Mucosa of descending colon (tissue), 3 donors: ENCODE measurements at regions of chr10 and their contacts with region 1.

Region 1: GRCh38 chr10:61284222-61284890 is 168.8 kb downstream of the TMEM26 start:
- DNase-seq: peak in 1 of 3 donors; percentile 35
- ATAC-seq: peak; percentile 46
- H3K4me3 ChIP-seq: no peak overlapping the region
- H3K4me1 ChIP-seq: no peaks in the 10 kb centered on the region
- CTCF ChIP-seq: no peak

Region 2: GRCh38 chr10:60816628-60817397 is 467.5 kb before region 1 on chr10:
- intact Hi-C with region 1: loop called (anchors 5 to 10 kb)
- DNase-seq: peak in 1 of 3 donors; percentile 70
- ATAC-seq: peak; percentile 87
- H3K4me3 ChIP-seq: no peak overlapping the region
- H3K4me1 ChIP-seq: no peaks in the 10 kb centered on the region
- CTCF ChIP-seq: peak; percentile 34

Region 3: GRCh38 chr10:61140765-61141392 is 143.5 kb before region 1 on chr10:
- intact Hi-C with region 1: loop called (anchors 10 kb)
- DNase-seq: peak in 1 of 3 donors; percentile 28
- ATAC-seq: peak; percentile 46
- H3K4me3 ChIP-seq: no peak overlapping the region
- H3K4me1 ChIP-seq: no peaks in the 10 kb centered on the region
- CTCF ChIP-seq: peak; percentile 34